PC-9 (cell line): ENCODE measurements at regions of chr16 and their contacts with region 1.

Region 1: GRCh38 chr16:31842864-31843263 is 30.7 kb upstream of the ZNF267 start:
- DNase-seq: no peak
- H3K4me3 ChIP-seq: no peak overlapping the region
- H3K27ac ChIP-seq: no peak overlapping the region
- H3K4me1 ChIP-seq: no peaks in the 10 kb centered on the region
- H3K27me3 ChIP-seq: peaks cover 6% of the 10 kb centered on the region; the same call in 1 of the 2 replicates
- CTCF ChIP-seq: no peak

Region 2: DNA sequence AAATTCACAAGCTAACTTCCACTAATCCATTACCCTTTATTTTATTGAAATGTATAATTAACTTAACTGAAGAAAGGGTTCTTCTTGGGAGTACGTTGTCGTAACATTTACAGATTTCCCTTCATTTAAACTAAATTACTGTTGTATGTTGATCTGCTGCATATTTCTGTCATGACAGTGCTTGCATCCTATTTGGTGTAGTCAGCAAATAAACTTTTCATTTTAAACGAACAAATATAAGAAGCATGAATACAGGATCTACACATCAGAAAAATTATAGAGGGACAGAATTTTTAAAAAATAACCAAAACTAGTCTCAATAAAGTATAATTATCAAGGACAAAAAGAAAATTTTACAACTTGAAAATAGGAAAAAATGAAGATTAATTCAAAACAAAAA is 35.8 kb before region 1 on chr16:
- CTCF ChIA-PET with region 1: no interaction called
- POLR2A ChIA-PET with region 1: no interaction called
- intact Hi-C with region 1: loop called (anchors 5 kb)
- DNase-seq: no peak
- H3K4me3 ChIP-seq: no peak overlapping the region
- H3K27ac ChIP-seq: no peak overlapping the region
- H3K4me1 ChIP-seq: no peaks in the 10 kb centered on the region
- H3K27me3 ChIP-seq: peaks cover 55% of the 10 kb centered on the region
- CTCF ChIP-seq: no peak